ENCODE measurements at regions of chr4 and their contacts with region 1.

Region 1: DNA sequence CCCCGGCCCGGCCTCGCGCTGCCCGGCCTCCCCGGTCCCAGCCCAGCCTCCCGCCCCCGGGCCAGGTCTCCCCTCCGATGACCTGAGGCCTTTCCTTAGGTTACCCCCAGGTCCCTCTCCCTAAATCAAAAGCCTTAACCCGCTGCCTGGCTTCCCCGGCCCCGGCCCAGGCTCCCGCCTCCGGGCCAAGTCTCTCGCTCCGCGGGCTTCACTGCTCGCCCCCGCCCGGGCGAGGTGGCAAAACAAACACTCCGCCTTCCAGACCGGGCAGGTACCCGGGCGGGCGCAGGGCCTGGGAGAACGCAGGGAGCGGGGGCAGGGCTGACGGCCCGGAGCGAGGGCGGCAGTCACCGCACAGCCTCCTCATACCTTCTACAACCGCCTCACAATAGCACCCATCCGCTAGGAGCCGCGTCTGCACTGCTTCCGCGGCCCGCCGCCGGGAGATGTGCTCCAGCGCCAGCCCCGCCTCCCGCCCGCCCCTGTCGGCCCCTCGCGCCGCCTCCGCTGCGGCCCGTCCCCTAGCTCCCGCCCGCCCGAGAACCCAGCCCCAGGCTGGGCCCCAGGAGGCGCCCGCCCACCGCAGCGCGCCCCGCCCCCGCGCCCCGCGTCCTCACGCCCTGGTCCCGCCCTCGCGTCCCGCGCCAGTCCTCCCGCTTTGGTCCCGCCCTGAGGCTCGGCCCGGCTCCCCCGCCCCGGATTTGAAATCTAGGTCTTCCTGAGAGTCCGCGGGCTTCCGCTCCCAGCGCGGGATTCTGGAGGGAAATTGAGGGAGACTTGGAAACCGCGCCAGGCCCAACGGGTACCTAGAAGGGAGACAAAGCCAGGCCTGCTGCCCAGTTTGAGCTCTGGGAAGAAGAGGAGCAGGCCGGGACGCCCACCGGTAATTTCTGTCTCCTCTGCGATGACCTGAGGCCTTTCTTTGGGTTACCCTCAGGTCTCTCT is at the starts of genes CASP3 and PRIMPOL:
- DNase-seq: peak; percentile 98
- ATAC-seq: peak; percentile 97
- total RNA-seq, gene CASP3: 11.6 TPM
- total RNA-seq, gene PRIMPOL: 10.9 TPM

Region 2: GRCh38 chr4:184263910-184264732 is 385.2 kb before region 1 on chr4:
- intact Hi-C with region 1: loop called (anchors 10 kb)
- DNase-seq: peak; percentile 95
- ATAC-seq: peak; percentile 90

Measured in Right ventricle myocardium superior (tissue), 1 donor.